CD14-positive monocyte (primary cell): ENCODE measurements at regions of chrX and their contacts with region 1.

Region 1: DNA sequence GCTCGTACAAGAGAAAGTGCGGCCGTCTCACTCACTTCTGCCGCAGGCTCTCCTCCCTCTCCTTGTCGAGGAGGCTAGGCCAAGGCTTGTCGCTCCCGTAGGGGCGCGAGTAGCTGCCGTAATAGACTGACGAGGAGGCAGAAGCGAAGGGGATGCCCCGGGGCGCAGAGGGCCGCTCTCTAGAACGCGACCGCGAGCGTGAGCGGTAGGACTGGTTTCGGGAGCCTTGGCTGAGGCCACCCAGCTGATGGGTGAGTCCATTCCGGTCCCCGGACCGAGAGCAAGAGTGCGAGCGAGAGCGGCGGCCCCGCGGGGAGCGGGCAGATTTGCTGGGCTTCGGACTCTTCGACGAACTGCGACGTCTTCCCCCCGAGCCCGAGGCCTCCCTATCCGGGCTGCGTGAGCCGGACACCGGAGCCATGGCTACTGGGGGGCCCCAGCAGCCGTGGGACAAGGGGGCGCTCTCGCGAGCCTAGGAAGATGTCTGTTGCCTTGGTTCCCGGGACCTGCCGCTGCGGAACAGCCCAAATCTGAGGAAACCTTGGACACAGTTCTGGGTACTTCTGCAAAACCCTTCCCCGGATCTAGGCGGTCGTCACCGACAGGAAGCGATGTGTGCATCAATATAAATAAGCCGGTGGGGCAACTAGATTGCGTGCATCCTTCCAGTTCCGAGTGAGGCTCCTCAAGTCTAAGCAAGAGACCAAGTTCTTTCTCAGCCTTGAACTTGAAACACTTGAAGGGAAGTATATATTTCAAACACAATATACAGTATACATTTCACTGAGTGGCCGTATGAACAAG is at the start of gene NKAP:
- DNase-seq: peak; percentile 85 to 91 (median 88)
- H3K4me3 ChIP-seq: peak within 1 kb of the TSS; percentile 73 to 87 (median 79)
- H3K4me3 Mint-ChIP-seq: peak within 1 kb of the TSS; percentile 90 to 98
- H3K27ac ChIP-seq: peak within 1 kb of the TSS; percentile 87 to 95
- H3K27ac Mint-ChIP-seq: peak within 1 kb of the TSS; percentile 92 to 97 (median 95)
- H3K4me1 ChIP-seq: peaks cover 16 to 18% of the 10 kb centered on the region in 2 donors
- H3K4me1 Mint-ChIP-seq: peaks cover 19% of the 10 kb centered on the region
- H3K27me3 ChIP-seq: no peaks in the 10 kb centered on the region
- H3K27me3 Mint-ChIP-seq: peaks cover 0 to 7% (median 0%) of the 10 kb centered on the region in 3 donors
- CTCF ChIP-seq: no peak
- polyA plus RNA-seq, gene NKAP: 2.0 to 2.9 (median 2.1) TPM

Region 2: GRCh38 chrX:119468930-119469635 is 474.3 kb before region 1 on chrX:
- intact Hi-C with region 1: loop called in 1 of 2 experiments (anchors 10 kb)
- DNase-seq: peak; percentile 76 to 81 (median 77)
- H3K4me3 ChIP-seq: peak overlapping the region; percentile 68 to 93 (median 91)
- H3K4me3 Mint-ChIP-seq: peak overlapping the region; percentile 83 to 84
- H3K27ac ChIP-seq: peak overlapping the region; percentile 90 to 99
- H3K27ac Mint-ChIP-seq: peak overlapping the region; percentile 90 to 95 (median 94)
- H3K4me1 ChIP-seq: peaks cover 12 to 14% of the 10 kb centered on the region in 2 donors
- H3K4me1 Mint-ChIP-seq: peaks cover 12% of the 10 kb centered on the region
- H3K27me3 ChIP-seq: no peaks in the 10 kb centered on the region
- H3K27me3 Mint-ChIP-seq: peaks cover 0 to 3% (median 0%) of the 10 kb centered on the region in 3 donors
- CTCF ChIP-seq: peak; percentile 75

Region 3: DNA sequence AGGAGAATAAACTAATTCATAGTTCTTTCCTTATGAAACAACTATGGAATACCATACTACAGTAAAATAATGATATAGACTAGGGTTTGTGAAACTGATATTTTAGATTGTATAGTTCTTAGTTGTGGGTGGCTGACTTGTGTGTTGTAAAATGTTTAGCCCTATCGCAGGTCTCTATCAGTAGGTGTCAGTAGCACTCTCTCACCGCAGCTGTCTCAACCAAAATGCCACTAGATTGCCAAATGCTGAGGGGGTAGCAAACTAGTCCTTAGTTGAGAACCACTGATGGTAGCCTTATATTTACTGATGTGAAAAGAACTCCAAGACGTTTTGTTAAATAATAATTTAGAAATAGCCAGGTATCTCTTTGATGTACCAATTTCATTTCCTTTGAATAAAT is 86.0 kb after region 1 on chrX:
- intact Hi-C with region 1: no loop called
- DNase-seq: no peak
- H3K4me3 ChIP-seq: no peak overlapping the region
- H3K4me3 Mint-ChIP-seq: no peak overlapping the region
- H3K27ac ChIP-seq: no peak overlapping the region
- H3K27ac Mint-ChIP-seq: no peak overlapping the region
- H3K4me1 ChIP-seq: no peaks in the 10 kb centered on the region
- H3K4me1 Mint-ChIP-seq: no peaks in the 10 kb centered on the region
- H3K27me3 ChIP-seq: peaks cover 0 to 10% of the 10 kb centered on the region in 2 donors
- H3K27me3 Mint-ChIP-seq: peaks cover 1 to 15% (median 3%) of the 10 kb centered on the region in 3 donors
- CTCF ChIP-seq: no peak